ENCODE measurements at regions of chr21 and their contacts with region 1.

Region 1: GRCh38 chr21:46097336-46098293 is at the start of gene COL6A2:
- DNase-seq: peak; percentile 66
- H3K4me3 Mint-ChIP-seq: peak within 1 kb of the TSS; percentile 46
- H3K27ac Mint-ChIP-seq: no peak within 1 kb of the TSS
- H3K4me1 Mint-ChIP-seq: no peaks in the 10 kb centered on the region
- H3K27me3 Mint-ChIP-seq: peaks cover 22% of the 10 kb centered on the region
- total RNA-seq, gene COL6A2: 4.3 to 4.8 TPM

Region 2: GRCh38 chr21:45935628-45936027 is 162.0 kb before region 1 on chr21:
- CTCF ChIA-PET with region 1: no interaction called
- POLR2A ChIA-PET with region 1: no interaction called
- intact Hi-C with region 1: no loop called
- DNase-seq: no peak
- H3K4me3 Mint-ChIP-seq: no peak overlapping the region
- H3K27ac Mint-ChIP-seq: no peak overlapping the region
- H3K4me1 Mint-ChIP-seq: peaks cover 27% of the 10 kb centered on the region
- H3K27me3 Mint-ChIP-seq: peaks cover 19% of the 10 kb centered on the region

Region 3: GRCh38 chr21:45973659-45974072 is 123.9 kb before region 1 on chr21:
- CTCF ChIA-PET with region 1: interaction called, 4 read pairs
- POLR2A ChIA-PET with region 1: no interaction called
- intact Hi-C with region 1: loop called (anchors 5 kb)
- DNase-seq: peak; percentile 87
- H3K4me3 Mint-ChIP-seq: peak overlapping the region; percentile 69
- H3K27ac Mint-ChIP-seq: peak overlapping the region; percentile 13
- H3K4me1 Mint-ChIP-seq: peaks cover 11% of the 10 kb centered on the region
- H3K27me3 Mint-ChIP-seq: peaks cover 28% of the 10 kb centered on the region

Region 4: GRCh38 chr21:46307625-46308024 is 210.0 kb after region 1 on chr21:
- CTCF ChIA-PET with region 1: no interaction called
- POLR2A ChIA-PET with region 1: no interaction called
- intact Hi-C with region 1: no loop called
- DNase-seq: no peak
- H3K4me3 Mint-ChIP-seq: no peak overlapping the region
- H3K27ac Mint-ChIP-seq: no peak overlapping the region
- H3K4me1 Mint-ChIP-seq: no peaks in the 10 kb centered on the region
- H3K27me3 Mint-ChIP-seq: no peaks in the 10 kb centered on the region